ENCODE measurements at regions of chr11 and their contacts with region 1.

Region 1: GRCh38 chr11:87144252-87144651 is 106.5 kb downstream of the TMEM135 start:
- DNase-seq: no peak
- ATAC-seq: no peak
- H3K4me3 ChIP-seq: no peak overlapping the region
- H3K27ac ChIP-seq: no peak overlapping the region
- H3K4me1 ChIP-seq: peaks cover 0 to 7% (median 0%) of the 10 kb centered on the region in 12 donors
- H3K27me3 ChIP-seq: no peaks in the 10 kb centered on the region
- CTCF ChIP-seq: no peak
- POLR2A ChIP-seq: no peak

Region 2: GRCh38 chr11:87236368-87236767 is 92.1 kb after region 1 on chr11:
- intact Hi-C with region 1: loop called in 1 of 10 experiments (anchors 10 kb)
- DNase-seq: no peak
- ATAC-seq: no peak
- H3K4me3 ChIP-seq: no peak overlapping the region
- H3K27ac ChIP-seq: no peak overlapping the region
- H3K4me1 ChIP-seq: peaks cover 0 to 24% (median 8%) of the 10 kb centered on the region in 12 donors
- H3K27me3 ChIP-seq: no peaks in the 10 kb centered on the region
- CTCF ChIP-seq: no peak
- POLR2A ChIP-seq: no peak

Measured in heart left ventricle (tissue), 16 donors.